Activated T-helper 1 cell treated with anti-CD3 and anti-CD28 coated beads, Interleukin-12 subunit alpha, Interleukin-12 subunit beta, Interleukin-2, Interleukin-4 antibody, amounts not matched to agents 30 ng/mL and 10 ng/mL and 1 ng/mL, durations not matched to agents 14 hours and 24 hours and 36 hours (primary cell): ENCODE measurements at regions of chr17 and their contacts with region 1.

Region 1: GRCh38 chr17:61451538-61452300 is 503 bp upstream of the TBX4 start:
- DNase-seq: no peak
- H3K4me3 Mint-ChIP-seq: no peak overlapping the region
- H3K27ac Mint-ChIP-seq: no peak overlapping the region
- H3K4me1 Mint-ChIP-seq: peaks cover 6% of the 10 kb centered on the region
- H3K27me3 Mint-ChIP-seq: peaks cover 72% of the 10 kb centered on the region

Region 2: DNA sequence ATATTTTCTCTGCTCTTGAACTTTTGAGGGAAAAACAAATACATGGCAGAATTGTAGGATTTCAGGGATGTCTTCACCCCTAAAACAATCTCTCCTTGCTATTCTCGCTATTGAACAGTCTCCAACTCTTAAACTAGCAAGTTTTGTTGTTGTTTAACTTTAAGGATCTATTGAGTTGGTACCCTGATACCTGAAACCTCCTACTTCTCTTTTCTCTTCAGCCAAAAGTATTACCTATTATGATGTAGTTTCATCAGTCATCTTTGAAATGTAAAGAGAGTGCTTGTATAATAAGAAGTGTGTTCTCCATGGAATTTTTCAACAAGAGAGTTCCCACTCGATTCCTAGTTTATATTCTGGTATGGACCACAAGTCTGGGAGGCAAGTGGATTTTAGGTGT is 263.6 kb before region 1 on chr17:
- intact Hi-C with region 1: no loop called
- DNase-seq: no peak
- H3K4me3 Mint-ChIP-seq: no peak overlapping the region
- H3K27ac Mint-ChIP-seq: no peak overlapping the region
- H3K4me1 Mint-ChIP-seq: peaks cover 11% of the 10 kb centered on the region
- H3K27me3 Mint-ChIP-seq: peaks cover 2% of the 10 kb centered on the region

Region 3: GRCh38 chr17:61399131-61400057 is 52.3 kb before region 1 on chr17 and contains the start of gene TBX2:
- intact Hi-C with region 1: loop called (anchors 1 kb)
- DNase-seq: no peak
- H3K4me3 Mint-ChIP-seq: peak within 1 kb of the TSS; percentile 56
- H3K27ac Mint-ChIP-seq: peak within 1 kb of the TSS; percentile 78
- H3K4me1 Mint-ChIP-seq: peaks cover 29% of the 10 kb centered on the region
- H3K27me3 Mint-ChIP-seq: peaks cover 56% of the 10 kb centered on the region
- total RNA-seq, gene TBX2: not detected in 2 replicates